ENCODE measurements at regions of chr1 and their contacts with region 1.

Region 1: GRCh38 chr1:23979878-23980724 is at the start of gene SRSF10:
- DNase-seq: peak; percentile 99
- ATAC-seq: peak; percentile 94
- H3K4me3 Mint-ChIP-seq: peak within 1 kb of the TSS; percentile 97
- H3K27ac Mint-ChIP-seq: peak within 1 kb of the TSS; percentile 100
- H3K4me1 Mint-ChIP-seq: peaks cover 38% of the 10 kb centered on the region
- H3K27me3 Mint-ChIP-seq: no peaks in the 10 kb centered on the region
- total RNA-seq, gene SRSF10: 213 to 225 TPM

Region 2: GRCh38 chr1:23691499-23692307 is 288.4 kb before region 1 on chr1 and contains the start of gene RPL11:
- CTCF ChIA-PET with region 1: no interaction called
- POLR2A ChIA-PET with region 1: no interaction called
- intact Hi-C with region 1: loop called in 1 of 2 experiments (anchors 2 kb)
- DNase-seq: peak; percentile 93
- ATAC-seq: peak; percentile 98
- H3K4me3 Mint-ChIP-seq: peak within 1 kb of the TSS; percentile 97
- H3K27ac Mint-ChIP-seq: peak within 1 kb of the TSS; percentile 98
- H3K4me1 Mint-ChIP-seq: peaks cover 43% of the 10 kb centered on the region
- H3K27me3 Mint-ChIP-seq: peaks cover under 1% of the 10 kb centered on the region
- total RNA-seq, gene RPL11: 1,003 to 1,481 TPM

Region 3: DNA sequence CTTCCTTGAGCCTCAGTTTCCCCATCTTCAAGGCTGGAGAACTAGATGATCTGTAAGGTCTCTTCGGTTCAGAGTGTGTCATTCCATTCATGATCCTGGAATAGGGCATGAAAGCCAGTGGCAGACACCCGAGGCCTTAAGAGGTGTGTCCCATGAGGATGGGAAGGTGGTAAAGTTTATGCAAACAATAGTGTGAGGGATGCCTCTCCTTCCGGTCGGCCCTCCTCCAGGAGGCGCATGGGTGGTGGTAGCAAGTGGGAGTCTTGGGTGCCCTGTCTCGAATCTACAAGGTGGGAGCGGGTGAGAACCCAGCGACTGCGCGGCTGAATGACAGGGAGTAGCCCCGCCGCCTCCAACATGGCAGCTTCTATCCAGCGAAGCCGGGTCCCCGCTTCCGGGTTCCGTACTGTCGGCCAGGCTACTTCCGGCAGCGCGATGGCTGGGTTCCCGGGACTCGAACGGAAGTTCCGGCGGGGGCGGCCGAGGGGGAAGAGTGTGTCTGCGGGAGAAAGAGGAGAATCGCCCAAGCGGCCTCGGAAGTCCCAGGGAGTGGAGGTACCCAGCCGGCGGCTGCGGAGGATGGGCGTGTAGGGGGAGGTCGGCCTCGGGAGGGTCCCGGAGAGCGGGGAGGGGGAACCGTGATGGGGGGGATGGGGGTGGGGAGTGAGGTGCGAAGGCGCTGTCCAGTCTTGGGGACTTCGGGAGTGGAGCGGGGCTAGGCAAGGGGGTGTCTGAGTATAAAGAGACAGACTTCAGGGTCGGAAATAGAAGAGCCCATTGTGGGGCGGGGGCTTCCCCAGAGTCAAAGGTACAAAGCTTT is 189.2 kb before region 1 on chr1 and contains the start of gene LYPLA2:
- CTCF ChIA-PET with region 1: no interaction called
- POLR2A ChIA-PET with region 1: no interaction called
- intact Hi-C with region 1: loop called in 1 of 2 experiments (anchors 2 kb)
- DNase-seq: peak; percentile 95
- ATAC-seq: peak; percentile 93
- H3K4me3 Mint-ChIP-seq: peak within 1 kb of the TSS; percentile 86
- H3K27ac Mint-ChIP-seq: peak within 1 kb of the TSS; percentile 79
- H3K4me1 Mint-ChIP-seq: peaks cover 13% of the 10 kb centered on the region
- H3K27me3 Mint-ChIP-seq: no peaks in the 10 kb centered on the region
- total RNA-seq, gene LYPLA2: 55.0 to 64.8 TPM

Region 4: DNA sequence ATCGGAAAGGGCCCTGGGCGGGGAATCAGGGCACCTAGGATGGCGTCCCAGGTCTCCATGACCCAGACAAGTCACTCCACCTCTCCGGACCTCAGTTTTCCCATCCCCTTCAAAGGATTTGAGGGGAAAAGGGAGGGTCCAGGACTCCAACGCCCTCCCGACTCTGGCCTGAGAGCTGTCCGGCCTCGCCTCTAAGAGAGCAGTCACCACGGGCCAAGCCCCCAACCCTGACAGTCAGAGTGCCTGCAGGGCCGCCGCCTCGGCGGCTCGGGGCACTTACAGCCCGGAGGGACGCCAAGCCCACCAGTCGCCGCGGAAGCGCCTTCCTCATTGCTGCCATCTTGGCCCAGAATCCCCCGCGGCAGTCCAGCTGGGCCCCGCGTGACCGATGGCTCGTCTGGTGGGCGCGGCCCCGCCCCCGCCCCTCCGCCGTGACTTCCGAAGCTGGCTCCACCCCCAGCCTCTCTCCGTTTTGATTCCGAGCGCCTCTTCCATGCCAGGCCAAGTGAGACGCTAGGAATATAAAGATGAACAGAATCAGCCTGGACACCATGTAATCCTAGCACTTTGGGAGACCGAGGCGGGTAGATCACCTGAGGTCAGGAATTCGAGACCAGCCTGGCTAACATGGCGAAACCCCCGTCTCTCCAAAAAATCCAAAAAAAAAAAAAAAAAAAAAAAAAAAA is 154.9 kb before region 1 on chr1 and contains the start of gene HMGCL:
- CTCF ChIA-PET with region 1: no interaction called
- POLR2A ChIA-PET with region 1: no interaction called
- intact Hi-C with region 1: loop called (anchors 1 kb)
- DNase-seq: peak; percentile 95
- ATAC-seq: peak; percentile 94
- H3K4me3 Mint-ChIP-seq: peak within 1 kb of the TSS; percentile 97
- H3K27ac Mint-ChIP-seq: peak within 1 kb of the TSS; percentile 97
- H3K4me1 Mint-ChIP-seq: peaks cover 19% of the 10 kb centered on the region
- H3K27me3 Mint-ChIP-seq: no peaks in the 10 kb centered on the region
- total RNA-seq, gene HMGCL: 31.9 to 46.0 TPM

Region 5: GRCh38 chr1:23862640-23863039 is 117.5 kb before region 1 on chr1:
- CTCF ChIA-PET with region 1: no interaction called
- POLR2A ChIA-PET with region 1: no interaction called
- intact Hi-C with region 1: no loop called
- DNase-seq: no peak
- ATAC-seq: no peak
- H3K4me3 Mint-ChIP-seq: no peak overlapping the region
- H3K27ac Mint-ChIP-seq: no peak overlapping the region
- H3K4me1 Mint-ChIP-seq: peaks cover 9% of the 10 kb centered on the region
- H3K27me3 Mint-ChIP-seq: no peaks in the 10 kb centered on the region

Region 6: DNA sequence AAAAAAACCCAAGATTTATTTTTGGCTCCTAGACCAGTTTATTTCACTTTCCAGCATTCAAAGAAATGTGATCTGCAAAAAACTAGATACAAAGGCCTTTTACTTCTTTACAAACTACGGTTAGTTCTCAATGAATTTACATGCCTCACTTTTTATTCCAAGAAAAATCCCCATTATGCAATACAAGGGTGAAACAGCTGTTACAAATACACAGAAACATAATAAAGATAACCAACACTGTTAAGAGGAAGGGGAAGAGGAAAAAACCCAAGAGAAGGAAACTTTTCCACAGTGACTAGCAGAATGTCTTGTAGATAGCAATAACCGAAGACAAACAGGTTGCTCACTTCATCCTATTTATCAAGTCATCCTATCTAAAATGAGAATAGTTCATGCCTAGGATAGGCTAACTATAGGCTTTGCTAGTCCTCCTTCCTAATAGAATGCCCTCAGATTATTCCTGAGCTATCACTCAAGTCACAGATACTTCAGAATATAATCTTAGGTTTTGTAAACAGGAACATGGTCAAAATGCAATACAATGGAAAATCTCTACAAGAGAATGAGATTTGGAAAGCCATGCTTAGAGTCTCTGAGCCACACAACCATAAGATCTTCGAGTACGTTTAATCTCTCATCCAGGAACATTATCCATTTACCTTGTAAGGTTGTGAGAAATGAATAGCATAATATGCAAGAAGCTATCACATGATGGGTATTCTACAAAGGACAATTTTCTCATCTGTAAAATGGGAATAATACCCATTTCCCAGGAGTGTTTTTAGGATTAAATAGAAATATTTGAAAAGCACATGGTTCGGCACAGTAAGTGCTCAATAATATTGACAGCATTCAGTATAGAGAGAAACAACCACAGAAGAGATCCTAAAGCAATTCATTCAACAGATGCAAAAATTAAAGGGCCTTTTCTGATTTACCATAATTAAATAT is 15.0 kb before region 1 on chr1:
- CTCF ChIA-PET with region 1: interaction called, 10 read pairs
- POLR2A ChIA-PET with region 1: interaction called, 20 read pairs
- intact Hi-C with region 1: loop called in 1 of 2 experiments (anchors 1 kb)
- DNase-seq: no peak
- ATAC-seq: peak; percentile 12
- H3K4me3 Mint-ChIP-seq: peak overlapping the region; percentile 9
- H3K27ac Mint-ChIP-seq: peak overlapping the region; percentile 87
- H3K4me1 Mint-ChIP-seq: peaks cover 67% of the 10 kb centered on the region
- H3K27me3 Mint-ChIP-seq: no peaks in the 10 kb centered on the region

Measured in activated CD4-positive, alpha-beta T cell treated with anti-CD3 and anti-CD28 coated beads for 36 hours (primary cell).